ENCODE measurements at regions of chr3 and their contacts with region 1.

Region 1: DNA sequence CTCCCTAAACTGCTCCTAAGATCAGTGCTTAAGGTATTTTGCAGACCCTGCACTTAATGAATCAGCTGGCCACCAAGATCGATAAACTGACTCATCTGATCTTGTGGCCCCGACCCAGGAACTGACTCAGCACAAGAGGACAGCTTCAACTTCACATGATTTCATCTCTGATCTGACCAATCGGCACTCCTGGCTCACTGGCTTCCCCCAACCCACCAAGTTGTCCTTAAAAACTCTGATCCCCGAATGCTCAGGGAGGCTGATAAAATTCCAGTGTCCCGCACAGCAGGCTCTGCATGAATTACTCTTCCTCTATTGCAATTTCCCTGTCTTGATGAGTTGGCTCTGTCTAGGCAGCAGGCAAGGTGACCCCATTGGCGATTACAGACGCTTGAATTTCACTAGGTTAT is 13.5 kb downstream of the HTR3E start:
- DNase-seq: peak; percentile 27 to 71 (median 53)
- H3K4me3 ChIP-seq: no peak overlapping the region
- H3K27ac ChIP-seq: no peak overlapping the region
- H3K4me1 ChIP-seq: peaks cover 0 to 6% of the 10 kb centered on the region in 2 donors
- H3K27me3 ChIP-seq: no peaks in the 10 kb centered on the region
- CTCF ChIP-seq: no peak
- POLR2A ChIP-seq: no peak

Region 2: DNA sequence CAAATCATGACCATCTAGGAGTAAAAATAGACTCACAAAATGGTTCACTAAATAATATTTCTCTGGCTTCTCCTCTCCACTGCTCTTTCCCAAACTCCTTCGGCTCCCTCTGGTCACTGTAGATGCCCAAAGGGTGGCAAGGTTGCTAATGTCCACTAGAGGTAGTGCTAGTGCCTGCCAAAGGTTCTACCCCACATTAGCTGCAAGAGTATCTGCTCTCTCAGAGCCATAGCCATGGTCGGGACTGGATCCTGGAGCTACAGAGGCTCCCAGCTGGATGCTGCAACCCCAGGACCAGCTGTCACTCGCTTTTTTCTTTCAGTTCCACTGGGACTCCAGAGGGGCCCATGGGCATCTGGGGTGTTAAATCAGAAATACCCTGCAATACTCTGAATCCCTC is 70.3 kb before region 1 on chr3:
- intact Hi-C with region 1: loop called in 1 of 2 experiments (anchors 10 kb)
- DNase-seq: peak in 4 of 7 donors; percentile 23 to 37 (median 34)
- H3K4me3 ChIP-seq: no peak overlapping the region
- H3K27ac ChIP-seq: no peak overlapping the region
- H3K4me1 ChIP-seq: no peaks in the 10 kb centered on the region
- H3K27me3 ChIP-seq: no peaks in the 10 kb centered on the region
- CTCF ChIP-seq: peak; percentile 18 to 42 (median 28)
- POLR2A ChIP-seq: no peak